ENCODE measurements at regions of chrX and their contacts with region 1.

Region 1: GRCh38 chrX:153763989-153764755 is at the start of gene PLXNB3:
- DNase-seq: peak; percentile 94
- ATAC-seq: peak; percentile 69
- H3K4me3 ChIP-seq: peak within 1 kb of the TSS; percentile 68
- H3K27ac ChIP-seq: peak within 1 kb of the TSS; percentile 86
- H3K4me1 ChIP-seq: peaks cover 28% of the 10 kb centered on the region
- H3K27me3 ChIP-seq: no peaks in the 10 kb centered on the region
- CTCF ChIP-seq: peak; percentile 89
- total RNA-seq, gene PLXNB3: 27.3 and 43.5 TPM in 2 replicates

Region 2: GRCh38 chrX:153774576-153775292 is 10.6 kb after region 1 on chrX:
- CTCF ChIA-PET with region 1: interaction called, 6 read pairs
- POLR2A ChIA-PET with region 1: interaction called, 10 read pairs
- intact Hi-C with region 1: no loop called
- DNase-seq: no peak
- ATAC-seq: no peak
- H3K4me3 ChIP-seq: no peak overlapping the region
- H3K27ac ChIP-seq: no peak overlapping the region
- H3K4me1 ChIP-seq: no peaks in the 10 kb centered on the region
- H3K27me3 ChIP-seq: no peaks in the 10 kb centered on the region
- CTCF ChIP-seq: no peak

Region 3: GRCh38 chrX:153794018-153794896 is 30.1 kb after region 1 on chrX and contains the starts of genes IDH3G and SSR4:
- CTCF ChIA-PET with region 1: no interaction called
- POLR2A ChIA-PET with region 1: no interaction called
- intact Hi-C with region 1: loop called (anchors 2 kb)
- DNase-seq: peak; percentile 94
- ATAC-seq: peak; percentile 87
- H3K4me3 ChIP-seq: peak within 1 kb of the TSS; percentile 90
- H3K27ac ChIP-seq: peak within 1 kb of the TSS; percentile 78
- H3K4me1 ChIP-seq: peaks cover 21% of the 10 kb centered on the region
- H3K27me3 ChIP-seq: no peaks in the 10 kb centered on the region
- CTCF ChIP-seq: no peak
- total RNA-seq, gene IDH3G: 88.6 and 104 TPM in 2 replicates
- total RNA-seq, gene SSR4: 232 and 298 TPM in 2 replicates

Region 4: GRCh38 chrX:153927922-153928760 is 164.0 kb after region 1 on chrX:
- CTCF ChIA-PET with region 1: interaction called, 5 read pairs
- POLR2A ChIA-PET with region 1: no interaction called
- intact Hi-C with region 1: loop called (anchors 5 kb)
- DNase-seq: peak; percentile 97
- ATAC-seq: peak; percentile 91
- H3K4me3 ChIP-seq: peak overlapping the region; percentile 70
- H3K27ac ChIP-seq: peak overlapping the region; percentile 70
- H3K4me1 ChIP-seq: peaks cover 25% of the 10 kb centered on the region
- H3K27me3 ChIP-seq: no peaks in the 10 kb centered on the region
- CTCF ChIP-seq: no peak; the same call in 1 of the 2 replicates

Region 5: DNA sequence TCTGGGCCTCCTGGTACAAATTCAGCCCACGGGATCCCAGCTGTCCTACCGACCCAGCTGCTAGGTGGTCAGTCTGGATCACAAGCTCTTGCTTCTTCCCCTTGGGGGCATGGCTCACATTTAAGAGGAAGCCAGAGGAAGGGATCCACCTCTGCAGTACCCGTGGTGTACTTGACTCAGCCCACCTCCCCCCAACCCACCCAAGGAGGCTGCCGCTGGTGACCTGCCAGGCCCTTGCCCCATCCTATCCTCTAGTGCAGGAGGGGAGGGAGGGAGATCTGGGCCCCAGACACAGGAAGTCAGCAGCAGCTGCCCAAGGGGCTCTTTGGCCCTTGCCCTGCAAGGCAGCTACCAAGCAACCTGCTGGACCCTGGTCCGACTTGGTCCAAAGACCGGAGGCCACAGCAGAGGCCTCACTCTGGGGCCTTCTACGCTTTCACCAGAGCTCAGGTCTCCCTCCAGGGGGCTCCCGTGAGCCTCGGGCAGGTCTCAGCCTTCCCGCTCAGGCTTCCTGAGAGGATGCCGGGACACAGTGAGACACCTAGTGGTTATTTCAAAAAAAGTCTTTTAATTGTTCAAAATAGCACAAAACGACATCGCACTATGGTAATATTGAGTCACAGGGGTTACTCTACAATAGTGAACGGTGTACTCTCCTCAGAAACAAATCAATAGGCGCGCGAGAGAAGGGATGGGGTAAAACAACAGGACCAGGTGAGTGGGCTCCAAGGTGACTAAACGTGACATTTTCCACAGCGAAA is 183.0 kb after region 1 on chrX:
- CTCF ChIA-PET with region 1: interaction called, 3 read pairs
- POLR2A ChIA-PET with region 1: no interaction called
- intact Hi-C with region 1: loop called (anchors 1 kb)
- DNase-seq: peak; percentile 84
- ATAC-seq: peak; percentile 88
- H3K4me3 ChIP-seq: no peak overlapping the region
- H3K27ac ChIP-seq: no peak overlapping the region
- H3K4me1 ChIP-seq: no peaks in the 10 kb centered on the region
- H3K27me3 ChIP-seq: no peaks in the 10 kb centered on the region
- CTCF ChIP-seq: peak; percentile 93